A673 (cell line): ENCODE measurements at regions of chr4 and their contacts with region 1.

Region 1: DNA sequence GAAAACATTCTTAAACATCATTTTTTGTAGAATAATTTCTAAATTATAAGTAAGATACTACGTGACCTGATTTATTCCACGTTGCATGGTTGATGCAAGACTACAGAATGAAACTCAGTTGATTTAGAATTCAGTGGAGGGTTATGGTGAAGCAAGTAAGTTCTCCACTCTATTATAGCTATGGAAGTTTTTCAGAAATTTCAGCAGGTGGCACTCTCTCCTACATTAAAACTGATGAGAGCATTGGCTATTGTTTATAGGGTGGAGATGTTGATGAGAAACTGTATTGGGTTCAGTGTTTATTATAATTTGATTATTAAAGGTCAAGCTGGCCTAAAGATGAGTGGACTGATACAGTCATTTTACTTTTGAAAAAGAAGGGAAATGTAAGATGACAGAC is 88.0 kb downstream of the FNIP2 start:
- DNase-seq: peak; percentile 78
- H3K4me3 ChIP-seq: no peak overlapping the region
- H3K27ac ChIP-seq: no peak overlapping the region
- H3K4me1 ChIP-seq: peaks cover 4% of the 10 kb centered on the region
- H3K27me3 ChIP-seq: no peaks in the 10 kb centered on the region
- CTCF ChIP-seq: peak; percentile 87

Region 2: GRCh38 chr4:158656439-158656838 is 200.4 kb before region 1 on chr4:
- CTCF ChIA-PET with region 1: no interaction called
- POLR2A ChIA-PET with region 1: no interaction called
- intact Hi-C with region 1: no loop called
- DNase-seq: no peak
- H3K4me3 ChIP-seq: no peak overlapping the region
- H3K27ac ChIP-seq: no peak overlapping the region
- H3K4me1 ChIP-seq: no peaks in the 10 kb centered on the region
- H3K27me3 ChIP-seq: no peaks in the 10 kb centered on the region
- CTCF ChIP-seq: no peak

Region 3: GRCh38 chr4:158722917-158723793 is 133.7 kb before region 1 on chr4 and contains the start of gene PPID:
- CTCF ChIA-PET with region 1: no interaction called
- POLR2A ChIA-PET with region 1: no interaction called
- intact Hi-C with region 1: no loop called
- DNase-seq: peak; percentile 93
- H3K4me3 ChIP-seq: peak within 1 kb of the TSS; percentile 68
- H3K27ac ChIP-seq: peak within 1 kb of the TSS; percentile 80
- H3K4me1 ChIP-seq: peaks cover 8% of the 10 kb centered on the region
- H3K27me3 ChIP-seq: peaks cover 5% of the 10 kb centered on the region
- CTCF ChIP-seq: no peak
- total RNA-seq, gene PPID: 79.4 and 87.6 TPM in 2 replicates

Region 4: DNA sequence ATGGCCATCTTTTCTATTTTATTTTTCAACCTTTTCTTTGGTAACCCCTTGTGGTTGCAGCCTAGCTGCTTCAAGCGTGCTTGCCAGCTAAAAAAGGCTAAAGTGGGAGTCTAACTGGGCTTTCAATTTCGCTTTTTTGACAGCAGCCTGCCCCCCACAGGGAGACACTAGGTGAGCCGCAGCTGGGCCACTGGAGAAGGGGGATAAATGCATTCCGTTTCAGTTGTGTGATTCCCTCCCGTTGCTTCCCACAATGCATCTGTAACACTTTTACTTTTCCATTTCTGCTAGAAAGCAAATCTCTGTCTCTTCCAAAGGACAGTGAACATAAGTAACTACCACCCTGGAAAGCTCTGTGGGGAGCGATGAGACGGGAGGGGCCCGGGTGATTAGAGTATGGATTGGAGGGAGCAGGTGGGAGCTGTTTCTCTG is 159.8 kb after region 1 on chr4:
- CTCF ChIA-PET with region 1: no interaction called
- POLR2A ChIA-PET with region 1: no interaction called
- intact Hi-C with region 1: loop called (anchors 1 kb)
- DNase-seq: peak; percentile 87
- H3K4me3 ChIP-seq: no peak overlapping the region
- H3K27ac ChIP-seq: no peak overlapping the region
- H3K4me1 ChIP-seq: peaks cover 21% of the 10 kb centered on the region
- H3K27me3 ChIP-seq: no peaks in the 10 kb centered on the region
- CTCF ChIP-seq: peak; percentile 59

Region 5: DNA sequence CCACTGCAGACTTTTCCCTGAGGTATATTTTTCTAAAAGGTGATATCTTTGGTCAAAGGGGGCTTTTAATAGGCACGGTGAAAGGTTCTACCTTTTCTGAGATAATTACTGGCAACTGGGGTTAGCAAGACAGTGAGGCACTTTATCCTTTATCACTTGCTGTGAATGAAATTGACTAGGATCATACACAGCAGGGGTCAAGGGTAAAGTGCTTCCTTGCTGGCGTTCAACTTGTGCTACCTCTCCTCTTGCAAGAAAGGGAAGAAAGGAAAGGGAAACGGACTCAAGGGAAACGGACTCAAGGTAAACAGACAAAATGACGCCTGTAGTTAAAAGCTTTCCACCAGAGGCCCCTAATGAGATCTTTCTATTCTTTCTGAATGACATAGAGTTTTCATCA is 167.4 kb after region 1 on chr4:
- CTCF ChIA-PET with region 1: no interaction called
- POLR2A ChIA-PET with region 1: no interaction called
- intact Hi-C with region 1: loop called (anchors 1 kb)
- DNase-seq: peak; percentile 47
- H3K4me3 ChIP-seq: no peak overlapping the region
- H3K27ac ChIP-seq: no peak overlapping the region
- H3K4me1 ChIP-seq: peaks cover 28% of the 10 kb centered on the region
- H3K27me3 ChIP-seq: no peaks in the 10 kb centered on the region
- CTCF ChIP-seq: no peak

Region 6: GRCh38 chr4:159206427-159206871 is 349.6 kb after region 1 on chr4:
- CTCF ChIA-PET with region 1: interaction called, 16 read pairs
- POLR2A ChIA-PET with region 1: no interaction called
- intact Hi-C with region 1: loop called (anchors 1 kb)
- DNase-seq: no peak
- H3K4me3 ChIP-seq: no peak overlapping the region
- H3K27ac ChIP-seq: no peak overlapping the region
- H3K4me1 ChIP-seq: no peaks in the 10 kb centered on the region
- H3K27me3 ChIP-seq: no peaks in the 10 kb centered on the region
- CTCF ChIP-seq: no peak